ENCODE measurements at regions of chr7 and their contacts with region 1.

Region 1: DNA sequence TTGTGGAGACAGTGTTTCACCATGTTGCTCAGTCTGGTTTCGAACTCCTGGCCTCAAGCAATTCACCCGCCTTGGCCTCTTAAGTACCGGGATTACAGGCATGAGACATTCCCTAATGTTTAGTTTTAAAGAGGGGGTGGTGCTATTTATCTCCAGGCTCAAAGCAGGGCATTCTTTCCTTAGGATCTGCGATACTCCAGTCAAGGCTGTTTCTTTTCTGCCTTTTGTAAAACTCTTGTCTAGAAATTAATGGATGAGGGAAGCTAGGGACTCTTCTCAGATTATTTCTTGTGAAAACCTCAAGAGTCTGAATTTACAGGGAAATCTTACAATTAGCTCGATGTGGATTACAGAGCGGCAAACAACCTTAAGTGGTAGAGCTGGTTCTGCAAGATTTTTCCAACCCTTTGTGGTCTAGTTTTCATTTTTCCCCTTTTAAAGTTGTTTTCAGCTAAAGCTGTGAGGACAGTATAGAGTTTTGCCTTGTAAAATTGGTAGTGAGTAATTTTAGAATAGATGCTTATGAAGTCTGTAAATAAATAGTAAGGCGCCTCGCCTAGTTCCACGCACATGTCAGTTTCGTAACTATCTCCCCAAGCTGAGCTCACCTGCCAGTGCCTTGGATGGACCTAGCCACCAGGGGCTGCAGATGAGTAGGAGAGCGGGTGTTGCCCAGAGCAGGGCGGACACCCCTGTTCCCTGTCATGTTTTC is 53.1 kb downstream of the CUX1 start:
- DNase-seq: no peak
- ATAC-seq: no peak
- H3K4me3 ChIP-seq: no peak overlapping the region
- H3K27ac ChIP-seq: no peak overlapping the region
- H3K4me1 ChIP-seq: peaks cover 8 to 66% (median 17%) of the 10 kb centered on the region in 9 donors
- H3K27me3 ChIP-seq: no peaks in the 10 kb centered on the region
- CTCF ChIP-seq: peak in 2 of 9 donors; percentile 12 to 23

Region 2: DNA sequence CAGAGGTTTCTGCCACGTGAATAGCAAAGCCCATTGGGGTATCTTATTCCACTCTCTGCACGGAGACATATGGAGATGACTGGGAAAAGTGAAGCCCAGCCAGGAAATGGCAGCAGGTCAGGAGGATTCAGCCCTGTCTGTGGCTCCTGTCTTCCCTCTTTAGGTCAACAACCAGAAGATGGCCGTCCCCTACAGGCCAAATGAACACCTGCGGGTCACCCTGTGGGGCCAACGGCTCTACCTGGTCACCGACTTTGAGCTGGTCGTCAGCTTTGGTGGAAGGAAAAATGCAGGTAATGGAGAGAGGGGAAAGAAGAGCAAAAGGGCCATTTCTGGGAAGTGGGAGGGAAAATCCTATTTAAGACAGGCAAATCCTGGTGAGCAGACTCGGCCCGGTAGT is 1081.5 kb before region 1 on chr7:
- intact Hi-C with region 1: no loop called
- DNase-seq: no peak
- ATAC-seq: no peak
- H3K4me3 ChIP-seq: no peak overlapping the region
- H3K27ac ChIP-seq: no peak overlapping the region
- H3K4me1 ChIP-seq: no peaks in the 10 kb centered on the region
- H3K27me3 ChIP-seq: peaks cover 4 to 58% (median 29%) of the 10 kb centered on the region in 7 donors
- CTCF ChIP-seq: no peak

Region 3: DNA sequence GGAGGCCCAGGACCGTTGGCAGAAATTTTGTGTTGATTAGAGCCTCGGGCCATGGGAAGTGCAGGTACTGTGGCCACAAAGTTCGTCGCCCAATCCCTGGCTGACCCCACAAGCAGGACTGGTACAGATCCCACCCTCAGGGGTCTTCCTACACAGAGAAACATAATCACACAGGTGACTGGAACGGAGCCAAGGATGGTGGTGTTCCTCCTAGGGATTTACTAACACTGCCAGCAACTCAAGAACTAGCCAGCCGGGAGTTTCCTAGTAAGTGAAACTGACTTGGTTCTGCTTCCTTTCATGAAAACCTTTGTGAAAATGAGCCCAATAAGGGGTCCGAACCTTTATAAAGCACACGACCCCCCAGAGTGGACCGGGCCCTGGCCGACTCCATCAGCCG is 47.4 kb before region 1 on chr7:
- intact Hi-C with region 1: loop called in 1 of 10 experiments (anchors 10 kb)
- DNase-seq: no peak
- ATAC-seq: peak in 3 of 8 donors; percentile 8 to 16 (median 13)
- H3K4me3 ChIP-seq: no peak overlapping the region
- H3K27ac ChIP-seq: peak overlapping the region in 5 of 10 donors; percentile 29 to 57 (median 48)
- H3K4me1 ChIP-seq: peaks cover 5 to 78% (median 51%) of the 10 kb centered on the region in 9 donors
- H3K27me3 ChIP-seq: no peaks in the 10 kb centered on the region
- CTCF ChIP-seq: no peak

Region 4: GRCh38 chr7:101838837-101839483 is 31.5 kb before region 1 on chr7:
- intact Hi-C with region 1: no loop called
- DNase-seq: no peak
- ATAC-seq: peak in 7 of 8 donors; percentile 38 to 94 (median 79)
- H3K4me3 ChIP-seq: no peak overlapping the region
- H3K27ac ChIP-seq: peak overlapping the region in 5 of 10 donors; percentile 38 to 61 (median 48)
- H3K4me1 ChIP-seq: peaks cover 0 to 25% (median 14%) of the 10 kb centered on the region in 9 donors
- H3K27me3 ChIP-seq: no peaks in the 10 kb centered on the region
- CTCF ChIP-seq: no peak